Right lobe of liver (tissue), 6 donors: ENCODE measurements at regions of chr11 and their contacts with region 1.

Region 1: GRCh38 chr11:72589802-72590761 is 84.1 kb downstream of the PDE2A start:
- DNase-seq: peak in 2 of 3 donors; percentile 44 to 64
- ATAC-seq: peak; percentile 12 to 39 (median 33)
- H3K4me3 ChIP-seq: no peak overlapping the region
- H3K27ac ChIP-seq: no peak overlapping the region
- H3K4me1 ChIP-seq: peaks cover 0 to 10% (median 0%) of the 10 kb centered on the region in 4 donors
- H3K27me3 ChIP-seq: peaks cover 0 to 24% of the 10 kb centered on the region in 2 donors
- CTCF ChIP-seq: peak; percentile 15 to 44 (median 33)
- POLR2A ChIP-seq: no peak

Region 2: DNA sequence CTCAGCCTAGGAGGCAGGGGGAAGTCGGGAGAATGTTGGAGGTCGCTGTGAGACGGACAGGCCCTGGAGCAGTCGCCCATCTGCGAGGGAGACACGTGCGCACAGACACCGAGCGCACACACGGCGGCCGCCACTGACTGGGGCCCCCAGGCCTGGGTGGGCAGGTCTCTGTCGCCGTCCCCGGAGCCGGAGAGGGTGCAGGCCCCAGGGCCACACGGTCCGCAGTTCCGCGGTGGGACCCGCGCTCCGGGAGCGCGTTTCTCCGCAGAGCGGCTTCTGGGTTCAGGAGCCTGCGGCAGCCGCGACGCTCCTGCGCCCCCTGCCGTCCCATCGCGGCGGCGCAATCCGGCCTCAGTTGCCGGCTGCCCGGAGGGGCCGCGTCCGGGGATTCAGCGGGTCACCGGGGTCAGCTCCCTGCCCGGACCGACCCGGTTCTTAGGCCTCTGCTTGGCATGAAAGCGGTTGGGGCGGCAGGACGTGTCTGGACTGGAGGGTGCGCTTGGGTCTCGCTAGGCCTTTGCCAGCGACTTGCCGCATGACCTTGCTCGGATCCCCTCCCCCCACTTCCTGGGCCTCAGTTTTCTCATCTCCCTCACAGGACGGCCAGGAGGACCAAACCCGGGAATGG is 52.9 kb after region 1 on chr11:
- intact Hi-C with region 1: loop called (anchors 2 to 5 kb)
- DNase-seq: peak; percentile 63 to 74 (median 67)
- ATAC-seq: peak; percentile 73 to 80 (median 78)
- H3K4me3 ChIP-seq: peak overlapping the region; percentile 40 to 55 (median 49)
- H3K27ac ChIP-seq: no peak overlapping the region
- H3K4me1 ChIP-seq: peaks cover 0 to 14% (median 4%) of the 10 kb centered on the region in 4 donors
- H3K27me3 ChIP-seq: no peaks in the 10 kb centered on the region
- CTCF ChIP-seq: peak; percentile 95 to 98 (median 97)
- POLR2A ChIP-seq: no peak

Region 3: DNA sequence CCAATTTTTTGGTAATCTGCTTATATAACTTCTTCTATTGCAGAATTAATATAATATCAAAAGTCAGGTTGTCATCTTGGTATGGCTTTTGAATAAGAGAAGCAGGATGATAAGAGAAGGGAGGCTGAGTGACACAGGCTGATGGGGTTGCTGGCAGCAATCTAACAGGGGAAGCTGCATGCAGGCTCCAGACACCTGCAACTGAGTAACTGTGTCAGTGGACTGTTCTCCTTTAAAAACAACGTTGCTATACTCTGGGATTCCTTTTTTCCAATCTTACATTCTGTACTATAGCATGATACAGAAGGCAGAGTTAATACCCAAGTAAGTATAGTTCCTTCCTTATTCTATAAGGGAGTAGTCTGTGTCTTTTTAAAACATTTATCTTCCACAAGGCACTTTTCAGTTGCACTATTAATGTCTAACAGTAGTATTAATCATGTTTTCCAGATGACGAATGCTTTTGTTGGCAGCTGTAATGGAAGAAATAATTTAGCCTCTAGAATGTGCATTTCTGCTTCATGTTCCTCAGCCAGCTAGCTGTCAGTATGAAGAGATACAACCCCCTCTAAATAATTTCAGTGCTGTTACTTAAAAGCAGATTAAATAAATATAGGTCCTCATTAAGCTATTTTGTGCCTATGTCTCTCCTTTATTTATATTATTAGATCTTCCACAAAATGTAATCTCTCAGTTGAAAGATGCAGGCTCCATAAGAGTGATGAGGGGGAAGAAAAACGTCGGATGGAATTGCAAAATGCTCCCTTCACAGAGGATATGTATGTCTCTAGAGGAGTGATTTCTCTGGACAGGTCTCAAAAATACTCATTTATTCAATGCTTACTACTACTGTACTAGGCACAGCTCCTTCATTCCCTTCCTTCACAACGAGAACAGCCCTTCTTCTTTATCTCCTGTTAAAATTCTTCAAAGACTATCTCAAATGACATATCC is 274.9 kb after region 1 on chr11:
- intact Hi-C with region 1: no loop called
- DNase-seq: no peak
- ATAC-seq: peak in 1 of 4 donors; percentile 12
- H3K4me3 ChIP-seq: no peak overlapping the region
- H3K27ac ChIP-seq: no peak overlapping the region
- H3K4me1 ChIP-seq: no peaks in the 10 kb centered on the region
- H3K27me3 ChIP-seq: no peaks in the 10 kb centered on the region
- CTCF ChIP-seq: no peak
- POLR2A ChIP-seq: no peak

Region 4: GRCh38 chr11:73114110-73114824 is 524.2 kb after region 1 on chr11:
- intact Hi-C with region 1: no loop called
- DNase-seq: no peak
- ATAC-seq: no peak
- H3K4me3 ChIP-seq: no peak overlapping the region
- H3K27ac ChIP-seq: no peak overlapping the region
- H3K4me1 ChIP-seq: no peaks in the 10 kb centered on the region
- H3K27me3 ChIP-seq: no peaks in the 10 kb centered on the region
- CTCF ChIP-seq: no peak
- POLR2A ChIP-seq: no peak